GM10248 (cell line): ENCODE measurements at regions of chr22 and their contacts with region 1.

Region 1: GRCh38 chr22:28123989-28124766 is 205.1 kb upstream of the PITPNB start:
- DNase-seq: no peak
- CTCF ChIP-seq: no peak

Region 2: GRCh38 chr22:28043266-28043665 is 80.9 kb before region 1 on chr22:
- CTCF ChIA-PET with region 1: no interaction called
- POLR2A ChIA-PET with region 1: no interaction called
- DNase-seq: no peak
- CTCF ChIP-seq: no peak

Region 3: GRCh38 chr22:28112548-28113043 is 11.6 kb before region 1 on chr22:
- CTCF ChIA-PET with region 1: interaction called, 23 read pairs
- POLR2A ChIA-PET with region 1: no interaction called
- DNase-seq: no peak
- CTCF ChIP-seq: peak; percentile 3